MCF 10A (cell line): ENCODE measurements at regions of chr2 and their contacts with region 1.

Region 1: GRCh38 chr2:152335010-152335725 is at the start of gene FMNL2:
- DNase-seq: peak; percentile 82
- H3K4me3 Mint-ChIP-seq: peak within 1 kb of the TSS; percentile 94
- H3K27ac Mint-ChIP-seq: peak within 1 kb of the TSS; percentile 91
- H3K4me1 Mint-ChIP-seq: peaks cover 34% of the 10 kb centered on the region
- H3K27me3 Mint-ChIP-seq: no peaks in the 10 kb centered on the region
- CTCF ChIP-seq: no peak
- total RNA-seq, gene FMNL2: 72.9 and 76.5 TPM in 2 replicates

Region 2: GRCh38 chr2:151927501-151928221 is 407.5 kb before region 1 on chr2:
- CTCF ChIA-PET with region 1: no interaction called
- POLR2A ChIA-PET with region 1: no interaction called
- intact Hi-C with region 1: no loop called
- DNase-seq: peak; percentile 84
- H3K4me3 Mint-ChIP-seq: peak overlapping the region; percentile 24
- H3K27ac Mint-ChIP-seq: peak overlapping the region; percentile 33
- H3K4me1 Mint-ChIP-seq: peaks cover 29% of the 10 kb centered on the region
- H3K27me3 Mint-ChIP-seq: no peaks in the 10 kb centered on the region
- CTCF ChIP-seq: no peak

Region 3: GRCh38 chr2:152005607-152006006 is 329.6 kb before region 1 on chr2:
- CTCF ChIA-PET with region 1: no interaction called
- POLR2A ChIA-PET with region 1: no interaction called
- intact Hi-C with region 1: no loop called
- DNase-seq: no peak
- H3K4me3 Mint-ChIP-seq: no peak overlapping the region
- H3K27ac Mint-ChIP-seq: no peak overlapping the region
- H3K4me1 Mint-ChIP-seq: peaks cover 8% of the 10 kb centered on the region
- H3K27me3 Mint-ChIP-seq: no peaks in the 10 kb centered on the region
- CTCF ChIP-seq: no peak

Region 4: DNA sequence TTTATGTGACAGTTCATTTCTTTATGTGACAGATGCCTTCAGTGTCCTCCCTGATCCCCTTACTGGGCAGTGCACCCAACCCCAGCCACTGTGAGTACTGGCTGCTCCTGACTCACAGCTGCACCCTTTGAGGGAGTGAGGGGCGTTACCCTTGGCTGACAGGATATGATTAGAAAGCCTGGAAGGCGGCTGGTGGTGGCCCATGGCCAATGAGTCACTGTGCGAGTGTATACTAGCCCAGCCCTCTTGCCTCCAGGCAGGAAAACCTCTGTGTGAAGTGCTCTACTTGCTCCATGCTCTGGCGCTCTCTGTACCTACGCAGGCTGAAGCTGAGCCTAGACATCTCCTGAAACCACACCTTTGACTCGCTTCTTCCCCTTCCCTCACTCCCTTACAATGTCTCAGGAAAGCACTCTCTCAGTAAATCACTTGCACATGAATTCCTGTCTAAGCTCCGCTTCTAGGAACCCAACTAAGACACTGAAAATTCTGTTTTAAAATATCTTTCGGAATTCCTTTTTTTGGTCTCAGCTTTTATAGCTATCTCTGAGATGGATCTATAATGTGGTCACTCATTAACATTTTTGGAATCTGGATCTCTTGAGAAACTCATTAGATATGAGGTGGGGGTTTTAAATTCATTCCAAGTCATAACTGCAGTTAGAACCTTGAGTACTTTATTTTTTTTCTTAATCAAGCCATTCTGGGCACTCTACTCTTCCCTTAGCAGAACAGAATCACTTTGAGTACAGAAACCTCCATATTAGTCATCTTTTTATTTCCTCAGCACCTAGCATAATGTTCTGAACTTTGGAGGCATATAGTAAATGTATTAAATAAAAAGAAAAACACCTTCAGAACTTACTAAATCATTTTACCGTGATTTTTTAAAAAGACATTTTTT is 134.4 kb before region 1 on chr2:
- CTCF ChIA-PET with region 1: no interaction called
- POLR2A ChIA-PET with region 1: interaction called, 23 read pairs
- intact Hi-C with region 1: loop called (anchors 1 kb)
- DNase-seq: peak; percentile 100
- H3K4me3 Mint-ChIP-seq: peak overlapping the region; percentile 53
- H3K27ac Mint-ChIP-seq: peak overlapping the region; percentile 74
- H3K4me1 Mint-ChIP-seq: peaks cover 26% of the 10 kb centered on the region
- H3K27me3 Mint-ChIP-seq: no peaks in the 10 kb centered on the region
- CTCF ChIP-seq: no peak

Region 5: GRCh38 chr2:152421521-152422370 is 86.6 kb after region 1 on chr2:
- CTCF ChIA-PET with region 1: interaction called, 3 read pairs
- POLR2A ChIA-PET with region 1: interaction called, 25 read pairs
- intact Hi-C with region 1: no loop called
- DNase-seq: peak; percentile 98
- H3K4me3 Mint-ChIP-seq: peak overlapping the region; percentile 30
- H3K27ac Mint-ChIP-seq: peak overlapping the region; percentile 69
- H3K4me1 Mint-ChIP-seq: peaks cover 27% of the 10 kb centered on the region
- H3K27me3 Mint-ChIP-seq: no peaks in the 10 kb centered on the region
- CTCF ChIP-seq: no peak

Region 6: GRCh38 chr2:152477347-152478092 is 142.4 kb after region 1 on chr2:
- CTCF ChIA-PET with region 1: interaction called, 4 read pairs
- POLR2A ChIA-PET with region 1: interaction called, 14 read pairs
- intact Hi-C with region 1: no loop called
- DNase-seq: peak; percentile 65
- H3K4me3 Mint-ChIP-seq: no peak overlapping the region
- H3K27ac Mint-ChIP-seq: peak overlapping the region; percentile 35
- H3K4me1 Mint-ChIP-seq: peaks cover 17% of the 10 kb centered on the region
- H3K27me3 Mint-ChIP-seq: no peaks in the 10 kb centered on the region
- CTCF ChIP-seq: no peak

Region 7: DNA sequence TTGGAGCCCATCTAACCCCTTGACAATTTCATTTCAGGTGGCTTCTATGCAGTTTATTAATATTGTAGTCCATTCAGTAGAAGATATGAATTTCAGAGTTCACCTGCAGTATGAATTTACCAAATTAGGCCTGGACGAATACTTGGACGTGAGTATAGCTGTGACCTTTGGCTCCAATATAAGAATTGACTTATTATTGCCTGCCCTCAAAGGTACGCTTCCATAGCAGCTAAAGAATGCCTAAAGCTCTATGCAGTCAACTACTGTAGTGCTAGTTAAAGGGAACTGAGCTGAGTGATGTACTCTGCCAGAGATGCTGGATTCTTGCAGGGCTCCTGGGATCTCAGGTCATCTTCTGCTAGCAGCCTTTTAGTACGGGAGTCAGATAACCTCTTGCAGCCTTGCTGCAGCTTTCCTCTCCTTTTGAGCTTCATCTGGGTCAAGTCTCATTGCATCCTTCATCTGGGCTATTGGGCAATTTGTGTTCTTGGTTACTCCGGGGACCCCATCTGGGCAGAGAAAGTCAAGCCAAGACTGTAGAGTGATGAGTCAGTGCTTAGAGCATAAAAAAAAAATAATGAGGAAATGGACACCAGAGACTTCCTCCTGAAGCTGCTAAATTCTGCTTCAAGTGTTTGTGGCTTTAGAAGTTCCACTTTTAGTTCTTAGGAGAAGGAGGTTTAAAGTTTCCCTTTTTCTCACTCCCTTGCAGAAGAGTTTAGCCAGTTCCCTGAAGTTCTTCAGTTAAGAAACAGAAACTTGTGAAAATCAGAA is 276.5 kb after region 1 on chr2:
- CTCF ChIA-PET with region 1: no interaction called
- POLR2A ChIA-PET with region 1: interaction called, 4 read pairs
- intact Hi-C with region 1: loop called (anchors 10 kb)
- DNase-seq: peak; percentile 81
- H3K4me3 Mint-ChIP-seq: no peak overlapping the region
- H3K27ac Mint-ChIP-seq: peak overlapping the region; percentile 20
- H3K4me1 Mint-ChIP-seq: peaks cover 6% of the 10 kb centered on the region
- H3K27me3 Mint-ChIP-seq: no peaks in the 10 kb centered on the region
- CTCF ChIP-seq: no peak